CD4-positive, alpha-beta memory T cell (primary cell): ENCODE measurements at regions of chr12 and their contacts with region 1.

Region 1: GRCh38 chr12:68175557-68176061 is 16.1 kb upstream of the IFNG start:
- DNase-seq: peak; percentile 81 to 90 (median 82)
- H3K4me3 ChIP-seq: peak overlapping the region in 1 of 2 donors; percentile 27
- H3K4me3 Mint-ChIP-seq: peak overlapping the region; percentile 71 to 90 (median 78)
- H3K27ac ChIP-seq: peak overlapping the region; percentile 58
- H3K27ac Mint-ChIP-seq: peak overlapping the region; percentile 90 to 97 (median 92)
- H3K4me1 ChIP-seq: peaks cover 49% of the 10 kb centered on the region
- H3K4me1 Mint-ChIP-seq: peaks cover 37 to 61% (median 49%) of the 10 kb centered on the region in 4 donors
- H3K27me3 ChIP-seq: no peaks in the 10 kb centered on the region
- H3K27me3 Mint-ChIP-seq: no peaks in the 10 kb centered on the region

Region 2: GRCh38 chr12:68189821-68190242 is 14.2 kb after region 1 on chr12:
- CTCF ChIA-PET with region 1: interaction called, 6 read pairs
- POLR2A ChIA-PET with region 1: interaction called, 20 read pairs
- intact Hi-C with region 1: no loop called
- DNase-seq: peak; percentile 35 to 70 (median 39)
- H3K4me3 ChIP-seq: no peak overlapping the region
- H3K4me3 Mint-ChIP-seq: peak overlapping the region; percentile 8 to 65 (median 45)
- H3K27ac ChIP-seq: peak overlapping the region; percentile 29
- H3K27ac Mint-ChIP-seq: peak overlapping the region; percentile 24 to 82 (median 75)
- H3K4me1 ChIP-seq: peaks cover 12% of the 10 kb centered on the region
- H3K4me1 Mint-ChIP-seq: peaks cover 9 to 18% (median 16%) of the 10 kb centered on the region in 4 donors
- H3K27me3 ChIP-seq: no peaks in the 10 kb centered on the region
- H3K27me3 Mint-ChIP-seq: no peaks in the 10 kb centered on the region